ENCODE measurements at regions of chr6 and their contacts with region 1.

Region 1: DNA sequence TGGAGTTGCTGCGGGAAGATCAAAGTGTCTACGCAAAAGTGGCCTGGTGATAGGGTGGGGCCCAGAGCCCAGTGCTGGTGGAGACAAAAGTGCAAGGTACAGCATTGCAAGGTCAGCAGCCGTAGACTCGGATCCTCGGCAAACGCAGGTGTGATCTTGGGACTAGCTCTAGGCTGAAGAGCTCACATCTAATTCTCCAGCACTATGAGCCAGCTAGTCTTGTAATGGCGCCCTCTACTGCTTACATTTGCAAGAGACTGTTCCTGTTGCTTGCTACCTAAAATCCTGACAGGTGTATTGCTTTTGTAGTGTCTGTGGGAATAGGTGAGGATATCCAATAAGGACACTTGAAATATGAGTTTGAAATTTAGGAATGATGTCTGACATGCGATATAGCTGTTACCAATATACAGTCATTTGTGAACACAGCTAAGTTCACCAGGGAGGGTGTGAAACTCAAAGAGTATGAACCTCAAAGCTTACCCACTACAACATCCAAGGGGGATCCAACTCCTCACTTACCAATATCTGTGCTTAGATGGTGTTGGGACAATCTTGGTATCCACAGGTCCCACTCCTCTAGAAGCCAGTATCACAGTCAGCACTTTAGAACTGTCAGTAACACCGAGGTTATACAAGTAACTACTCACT is 58.4 kb downstream of the PDE7B start:
- DNase-seq: peak; percentile 17 to 88
- ATAC-seq: peak; percentile 79 to 92 (median 92)
- H3K4me3 ChIP-seq: no peak overlapping the region
- H3K4me3 Mint-ChIP-seq: no peak overlapping the region
- H3K27ac ChIP-seq: no peak overlapping the region
- H3K27ac Mint-ChIP-seq: no peak overlapping the region
- H3K4me1 ChIP-seq: peaks cover 2% of the 10 kb centered on the region
- H3K4me1 Mint-ChIP-seq: no peaks in the 10 kb centered on the region
- H3K27me3 ChIP-seq: no peaks in the 10 kb centered on the region
- H3K27me3 Mint-ChIP-seq: peaks cover 0 to 3% of the 10 kb centered on the region in 2 donors
- CTCF ChIP-seq: peak; percentile 83

Region 2: DNA sequence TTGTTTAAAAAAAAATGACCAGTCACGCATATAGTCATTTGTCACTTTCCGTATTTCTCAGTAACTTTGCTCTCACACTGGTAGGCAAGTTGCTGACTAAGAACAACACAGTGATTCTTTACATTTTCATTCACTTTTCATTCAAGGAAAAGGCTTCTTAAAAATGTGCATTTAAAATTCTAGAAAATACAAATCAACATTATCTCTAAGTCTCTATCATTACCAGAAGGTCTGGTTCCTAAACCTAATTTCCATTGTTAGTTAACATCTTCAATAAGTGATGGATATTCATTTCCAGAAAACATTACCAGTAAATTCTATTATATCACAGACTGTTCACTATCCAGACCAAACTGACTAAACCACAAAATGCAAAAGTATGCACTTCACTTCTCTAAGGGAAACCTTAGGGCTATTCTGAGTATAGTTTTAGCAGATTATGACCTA is 527.7 kb before region 1 on chr6:
- intact Hi-C with region 1: no loop called
- DNase-seq: no peak
- ATAC-seq: no peak
- H3K4me3 ChIP-seq: no peak overlapping the region
- H3K4me3 Mint-ChIP-seq: no peak overlapping the region
- H3K27ac ChIP-seq: no peak overlapping the region
- H3K27ac Mint-ChIP-seq: no peak overlapping the region
- H3K4me1 ChIP-seq: no peaks in the 10 kb centered on the region
- H3K4me1 Mint-ChIP-seq: no peaks in the 10 kb centered on the region
- H3K27me3 ChIP-seq: no peaks in the 10 kb centered on the region
- H3K27me3 Mint-ChIP-seq: no peaks in the 10 kb centered on the region
- CTCF ChIP-seq: no peak

Region 3: GRCh38 chr6:135451693-135452092 is 458.2 kb before region 1 on chr6:
- intact Hi-C with region 1: loop called (anchors 2 kb)
- DNase-seq: peak in 1 of 2 donors; percentile 68
- ATAC-seq: peak; percentile 49 to 60 (median 52)
- H3K4me3 ChIP-seq: no peak overlapping the region
- H3K4me3 Mint-ChIP-seq: no peak overlapping the region
- H3K27ac ChIP-seq: no peak overlapping the region
- H3K27ac Mint-ChIP-seq: no peak overlapping the region
- H3K4me1 ChIP-seq: no peaks in the 10 kb centered on the region
- H3K4me1 Mint-ChIP-seq: no peaks in the 10 kb centered on the region
- H3K27me3 ChIP-seq: no peaks in the 10 kb centered on the region
- H3K27me3 Mint-ChIP-seq: no peaks in the 10 kb centered on the region
- CTCF ChIP-seq: peak; percentile 80

Region 4: DNA sequence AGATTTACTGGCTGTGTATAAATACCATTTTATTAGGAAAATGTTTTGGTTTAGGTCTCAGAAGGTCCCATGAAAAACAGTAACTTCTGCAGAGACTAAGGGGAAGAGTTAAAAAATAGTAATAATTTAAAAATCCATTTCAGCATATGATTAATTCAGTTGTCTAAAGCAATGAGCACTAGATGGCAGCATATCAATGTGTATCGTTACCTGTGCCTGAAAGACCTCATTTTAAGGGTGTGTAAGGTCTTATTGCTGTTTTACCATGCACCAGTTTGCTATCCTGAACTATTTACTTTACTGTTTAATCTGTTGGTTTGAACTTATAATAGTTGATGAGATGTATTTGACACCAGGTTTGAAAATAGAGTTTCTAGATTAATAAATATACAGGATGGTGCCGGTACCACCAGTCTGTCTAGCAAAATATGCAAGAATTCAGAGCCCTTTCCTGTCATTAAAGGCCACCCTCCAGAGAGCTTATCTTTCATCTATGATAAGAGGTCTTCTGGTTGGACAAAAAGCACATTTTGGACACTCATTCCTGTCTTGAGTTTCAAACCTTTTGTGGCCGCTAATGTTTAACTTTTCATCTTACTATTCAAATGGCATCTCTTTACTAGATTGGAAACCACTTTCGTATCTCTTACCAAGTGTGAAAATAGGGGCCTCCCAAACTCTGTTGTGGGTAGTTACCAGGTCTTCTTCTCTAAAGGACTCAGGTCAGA is 403.4 kb before region 1 on chr6:
- intact Hi-C with region 1: loop called (anchors 1 kb)
- DNase-seq: peak in 1 of 2 donors; percentile 75
- ATAC-seq: peak; percentile 87 to 91 (median 88)
- H3K4me3 ChIP-seq: no peak overlapping the region
- H3K4me3 Mint-ChIP-seq: peak overlapping the region; percentile 17
- H3K27ac ChIP-seq: no peak overlapping the region
- H3K27ac Mint-ChIP-seq: peak overlapping the region; percentile 14 to 27
- H3K4me1 ChIP-seq: peaks cover 4% of the 10 kb centered on the region
- H3K4me1 Mint-ChIP-seq: peaks cover 6 to 8% of the 10 kb centered on the region in 2 donors
- H3K27me3 ChIP-seq: no peaks in the 10 kb centered on the region
- H3K27me3 Mint-ChIP-seq: no peaks in the 10 kb centered on the region
- CTCF ChIP-seq: peak; percentile 75

Region 5: GRCh38 chr6:135535989-135536414 is 373.9 kb before region 1 on chr6:
- intact Hi-C with region 1: loop called (anchors 1 kb)
- DNase-seq: peak in 1 of 2 donors; percentile 64
- ATAC-seq: peak; percentile 46 to 66 (median 46)
- H3K4me3 ChIP-seq: no peak overlapping the region
- H3K4me3 Mint-ChIP-seq: peak overlapping the region; percentile 25
- H3K27ac ChIP-seq: no peak overlapping the region
- H3K27ac Mint-ChIP-seq: peak overlapping the region; percentile 22 to 36
- H3K4me1 ChIP-seq: peaks cover 11% of the 10 kb centered on the region
- H3K4me1 Mint-ChIP-seq: peaks cover 33 to 36% of the 10 kb centered on the region in 2 donors
- H3K27me3 ChIP-seq: no peaks in the 10 kb centered on the region
- H3K27me3 Mint-ChIP-seq: peaks cover 3 to 5% of the 10 kb centered on the region in 2 donors
- CTCF ChIP-seq: peak; percentile 79

Region 6: GRCh38 chr6:135675862-135676261 is 234.0 kb before region 1 on chr6:
- intact Hi-C with region 1: loop called (anchors 1 kb)
- DNase-seq: peak in 1 of 2 donors; percentile 80
- ATAC-seq: peak in 2 of 3 donors; percentile 70 to 74
- H3K4me3 ChIP-seq: no peak overlapping the region
- H3K4me3 Mint-ChIP-seq: no peak overlapping the region
- H3K27ac ChIP-seq: no peak overlapping the region
- H3K27ac Mint-ChIP-seq: no peak overlapping the region
- H3K4me1 ChIP-seq: no peaks in the 10 kb centered on the region
- H3K4me1 Mint-ChIP-seq: no peaks in the 10 kb centered on the region
- H3K27me3 ChIP-seq: no peaks in the 10 kb centered on the region
- H3K27me3 Mint-ChIP-seq: no peaks in the 10 kb centered on the region
- CTCF ChIP-seq: peak; percentile 58

Region 7: DNA sequence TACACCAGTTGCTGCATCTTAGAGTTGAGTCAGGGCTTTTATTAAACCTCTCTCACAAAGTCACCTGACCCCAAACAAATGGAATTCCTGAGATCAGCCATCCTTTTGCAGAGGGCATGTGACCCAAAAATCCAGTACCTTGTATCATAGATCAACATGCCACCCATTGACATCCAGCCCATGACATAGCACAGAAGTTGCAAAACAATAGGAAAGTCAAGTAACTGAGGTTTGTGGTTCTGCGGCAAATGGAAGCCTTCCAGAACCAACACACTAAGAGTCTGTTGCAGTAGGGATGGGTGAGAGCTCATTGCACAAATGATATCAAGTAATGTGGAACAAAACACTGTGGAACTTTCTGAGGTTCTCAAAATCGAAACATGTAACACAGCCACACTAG is 52.9 kb after region 1 on chr6:
- intact Hi-C with region 1: no loop called
- DNase-seq: no peak
- ATAC-seq: no peak
- H3K4me3 ChIP-seq: no peak overlapping the region
- H3K4me3 Mint-ChIP-seq: no peak overlapping the region
- H3K27ac ChIP-seq: no peak overlapping the region
- H3K27ac Mint-ChIP-seq: no peak overlapping the region
- H3K4me1 ChIP-seq: no peaks in the 10 kb centered on the region
- H3K4me1 Mint-ChIP-seq: no peaks in the 10 kb centered on the region
- H3K27me3 ChIP-seq: no peaks in the 10 kb centered on the region
- H3K27me3 Mint-ChIP-seq: peaks cover 10 to 21% of the 10 kb centered on the region in 2 donors
- CTCF ChIP-seq: no peak

Region 8: DNA sequence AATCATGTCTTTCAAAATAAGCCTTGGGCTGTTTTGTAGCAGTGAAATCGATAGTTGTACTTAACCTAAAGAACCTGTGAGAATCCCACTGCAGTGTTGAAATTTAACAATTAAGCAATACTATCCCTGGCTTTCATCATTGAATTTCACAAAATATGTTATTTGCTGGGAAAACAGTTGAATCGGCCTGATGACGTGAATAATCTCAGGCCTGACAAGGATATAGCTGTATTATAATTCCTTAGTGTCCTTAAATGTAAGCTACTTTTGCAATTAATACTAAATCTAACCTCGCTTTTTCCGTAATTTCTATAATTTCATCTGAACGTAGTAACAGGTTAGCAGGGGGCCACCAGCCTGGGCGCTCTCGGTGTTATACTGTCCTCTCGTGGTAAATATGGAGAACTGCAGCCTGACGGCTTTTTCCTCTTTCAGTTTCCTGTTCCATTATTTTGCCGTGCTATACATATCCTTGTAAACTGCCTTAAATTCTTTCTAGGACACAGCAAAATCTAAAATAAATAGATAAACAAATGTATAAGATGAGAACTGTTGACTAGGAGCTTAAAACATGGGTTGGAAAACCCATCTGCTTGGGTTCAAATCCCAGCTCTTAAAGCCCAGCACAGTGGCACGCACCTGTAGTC is 316.3 kb after region 1 on chr6:
- intact Hi-C with region 1: loop called (anchors 10 kb)
- DNase-seq: peak; percentile 43 to 79
- ATAC-seq: peak; percentile 94 to 98 (median 96)
- H3K4me3 ChIP-seq: peak overlapping the region; percentile 2
- H3K4me3 Mint-ChIP-seq: peak overlapping the region; percentile 79
- H3K27ac ChIP-seq: no peak overlapping the region
- H3K27ac Mint-ChIP-seq: peak overlapping the region in 1 of 2 donors; percentile 71
- H3K4me1 ChIP-seq: peaks cover 4% of the 10 kb centered on the region
- H3K4me1 Mint-ChIP-seq: peaks cover 10 to 11% of the 10 kb centered on the region in 2 donors
- H3K27me3 ChIP-seq: no peaks in the 10 kb centered on the region
- H3K27me3 Mint-ChIP-seq: peaks cover 0 to 5% of the 10 kb centered on the region in 2 donors
- CTCF ChIP-seq: peak; percentile 100

Measured in natural killer cell (primary cell).